ENCODE measurements at regions of chr11 and their contacts with region 1.

Region 1: GRCh38 chr11:43282607-43283440 is 29.0 kb upstream of the API5 start:
- DNase-seq: no peak
- H3K4me3 ChIP-seq: no peak overlapping the region
- H3K27ac ChIP-seq: no peak overlapping the region
- H3K4me1 ChIP-seq: no peaks in the 10 kb centered on the region
- H3K27me3 ChIP-seq: no peaks in the 10 kb centered on the region
- CTCF ChIP-seq: peak; percentile 85

Region 2: GRCh38 chr11:42770444-42771065 is 512.3 kb before region 1 on chr11:
- intact Hi-C with region 1: loop called (anchors 5 kb)
- DNase-seq: peak; percentile 20
- H3K4me3 ChIP-seq: no peak overlapping the region
- H3K27ac ChIP-seq: no peak overlapping the region
- H3K4me1 ChIP-seq: no peaks in the 10 kb centered on the region
- H3K27me3 ChIP-seq: no peaks in the 10 kb centered on the region
- CTCF ChIP-seq: no peak

Region 3: DNA sequence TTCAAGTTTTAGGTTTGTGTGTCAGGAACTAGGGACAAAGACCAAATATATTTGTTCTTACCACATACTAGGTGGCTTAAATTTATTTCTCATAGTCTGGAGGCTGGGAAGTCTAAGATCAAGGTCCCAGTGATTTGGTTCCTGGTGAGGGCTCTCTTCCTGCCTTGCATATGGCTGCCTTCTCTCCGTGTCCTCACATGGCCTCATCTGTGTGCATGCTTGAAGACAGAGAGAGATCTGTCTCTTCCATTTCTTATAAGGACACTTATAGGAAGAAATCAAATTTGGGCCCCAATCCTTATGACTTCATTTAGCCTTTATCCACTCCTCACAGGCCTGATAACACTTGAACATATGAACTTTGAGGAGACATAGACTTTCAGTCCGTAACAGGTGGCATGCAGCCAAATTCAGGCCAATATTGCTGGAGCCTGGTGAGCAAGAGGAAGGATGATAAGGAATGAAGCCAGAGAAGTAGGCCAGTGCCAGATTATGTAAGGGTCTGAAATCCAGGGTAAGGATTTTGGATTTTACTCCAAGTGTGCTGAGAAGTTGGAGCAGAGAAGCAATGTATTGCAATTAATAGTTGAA is 111.0 kb after region 1 on chr11:
- intact Hi-C with region 1: no loop called
- DNase-seq: peak; percentile 29
- H3K4me3 ChIP-seq: no peak overlapping the region
- H3K27ac ChIP-seq: no peak overlapping the region
- H3K4me1 ChIP-seq: no peaks in the 10 kb centered on the region
- H3K27me3 ChIP-seq: no peaks in the 10 kb centered on the region
- CTCF ChIP-seq: no peak